A549 (cell line): ENCODE measurements at regions of chr17 and their contacts with region 1.

Region 1: GRCh38 chr17:38533866-38534497 is 71.8 kb downstream of the SRCIN1 start:
- DNase-seq: no peak
- ATAC-seq: peak; percentile 35 to 41; a peak in 4 of 6 replicates
- H3K4me3 ChIP-seq: no peak overlapping the region
- H3K27ac ChIP-seq: no peak overlapping the region
- H3K4me1 ChIP-seq: no peaks in the 10 kb centered on the region
- CTCF ChIP-seq: no peak
- EP300 ChIP-seq: no peak
- POLR2A ChIP-seq: no peak
- RAD21 ChIP-seq: no peak

Region 2: GRCh38 chr17:38550661-38551060 is 16.7 kb after region 1 on chr17:
- CTCF ChIA-PET with region 1: interaction called, 21 read pairs
- POLR2A ChIA-PET with region 1: no interaction called
- DNase-seq: no peak
- ATAC-seq: no peak; a peak in 1 of 6 replicates
- H3K4me3 ChIP-seq: no peak overlapping the region
- H3K27ac ChIP-seq: no peak overlapping the region
- H3K4me1 ChIP-seq: no peaks in the 10 kb centered on the region
- CTCF ChIP-seq: no peak
- EP300 ChIP-seq: no peak
- POLR2A ChIP-seq: no peak
- RAD21 ChIP-seq: no peak